ENCODE measurements at regions of chrX and their contacts with region 1.

Region 1: DNA sequence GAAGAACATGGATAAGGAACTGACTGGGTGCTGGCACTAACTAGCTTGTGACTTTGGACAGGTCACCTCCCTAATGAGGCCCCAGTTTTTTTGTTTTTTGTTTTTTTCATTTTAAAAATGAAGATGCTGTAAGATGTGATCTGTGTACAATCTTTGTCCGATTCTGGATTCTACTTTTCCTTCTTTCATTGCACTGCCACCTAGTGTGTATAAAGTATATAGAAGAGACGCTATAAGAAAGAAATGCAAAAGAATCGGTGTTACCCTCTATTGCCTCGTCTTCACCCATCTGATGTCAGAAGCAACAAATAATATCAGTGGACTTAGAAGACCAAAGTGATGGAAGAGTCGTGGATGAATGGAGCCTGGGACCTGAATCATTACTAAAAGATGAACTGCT is 58.6 kb upstream of the P2RY10 start:
- DNase-seq: peak in 6 of 9 donors; percentile 2 to 33 (median 18)
- ATAC-seq: peak; percentile 67
- H3K4me3 ChIP-seq: no peak overlapping the region
- H3K4me3 Mint-ChIP-seq: peak overlapping the region in 3 of 10 donors; percentile 0 to 46 (median 38)
- H3K27ac ChIP-seq: no peak overlapping the region
- H3K27ac Mint-ChIP-seq: peak overlapping the region in 5 of 9 donors; percentile 6 to 51 (median 13)
- H3K4me1 ChIP-seq: peaks cover 0 to 4% of the 10 kb centered on the region in 2 donors
- H3K4me1 Mint-ChIP-seq: peaks cover 4 to 11% (median 9%) of the 10 kb centered on the region in 7 donors
- H3K27me3 ChIP-seq: no peaks in the 10 kb centered on the region
- H3K27me3 Mint-ChIP-seq: no peaks in the 10 kb centered on the region

Region 2: GRCh38 chrX:78119521-78120227 is 766.9 kb before region 1 on chrX:
- CTCF ChIA-PET with region 1: no interaction called
- POLR2A ChIA-PET with region 1: no interaction called
- intact Hi-C with region 1: loop called in 1 of 2 experiments (anchors 1 kb)
- DNase-seq: no peak
- ATAC-seq: peak; percentile 45
- H3K4me3 ChIP-seq: no peak overlapping the region
- H3K4me3 Mint-ChIP-seq: peak overlapping the region in 1 of 10 donors; percentile 12
- H3K27ac ChIP-seq: peak overlapping the region; percentile 27
- H3K27ac Mint-ChIP-seq: peak overlapping the region in 6 of 9 donors; percentile 11 to 84 (median 28)
- H3K4me1 ChIP-seq: peaks cover 0 to 25% of the 10 kb centered on the region in 2 donors
- H3K4me1 Mint-ChIP-seq: peaks cover 26 to 70% (median 56%) of the 10 kb centered on the region in 7 donors
- H3K27me3 ChIP-seq: no peaks in the 10 kb centered on the region
- H3K27me3 Mint-ChIP-seq: no peaks in the 10 kb centered on the region

Region 3: GRCh38 chrX:78901396-78901795 is 14.8 kb after region 1 on chrX:
- CTCF ChIA-PET with region 1: no interaction called
- POLR2A ChIA-PET with region 1: no interaction called
- intact Hi-C with region 1: no loop called
- DNase-seq: no peak
- ATAC-seq: no peak
- H3K4me3 ChIP-seq: no peak overlapping the region
- H3K4me3 Mint-ChIP-seq: no peak overlapping the region
- H3K27ac ChIP-seq: no peak overlapping the region
- H3K27ac Mint-ChIP-seq: no peak overlapping the region
- H3K4me1 ChIP-seq: no peaks in the 10 kb centered on the region
- H3K4me1 Mint-ChIP-seq: peaks cover 0 to 4% (median 0%) of the 10 kb centered on the region in 7 donors
- H3K27me3 ChIP-seq: no peaks in the 10 kb centered on the region
- H3K27me3 Mint-ChIP-seq: no peaks in the 10 kb centered on the region

Measured in naive thymus-derived CD4-positive, alpha-beta T cell (primary cell).